CD4-positive, alpha-beta memory T cell (primary cell): ENCODE measurements at regions of chr12 and their contacts with region 1.

Region 1: GRCh38 chr12:66279123-66279712 is 23.1 kb upstream of the HELB start:
- DNase-seq: peak; percentile 43 to 58 (median 58)
- H3K4me3 ChIP-seq: no peak overlapping the region
- H3K4me3 Mint-ChIP-seq: peak overlapping the region; percentile 17 to 82 (median 65)
- H3K27ac ChIP-seq: no peak overlapping the region
- H3K27ac Mint-ChIP-seq: peak overlapping the region in 4 of 7 donors; percentile 5 to 58 (median 28)
- H3K4me1 ChIP-seq: peaks cover 43% of the 10 kb centered on the region
- H3K4me1 Mint-ChIP-seq: peaks cover 37 to 74% (median 59%) of the 10 kb centered on the region in 4 donors
- H3K27me3 ChIP-seq: no peaks in the 10 kb centered on the region
- H3K27me3 Mint-ChIP-seq: no peaks in the 10 kb centered on the region

Region 2: DNA sequence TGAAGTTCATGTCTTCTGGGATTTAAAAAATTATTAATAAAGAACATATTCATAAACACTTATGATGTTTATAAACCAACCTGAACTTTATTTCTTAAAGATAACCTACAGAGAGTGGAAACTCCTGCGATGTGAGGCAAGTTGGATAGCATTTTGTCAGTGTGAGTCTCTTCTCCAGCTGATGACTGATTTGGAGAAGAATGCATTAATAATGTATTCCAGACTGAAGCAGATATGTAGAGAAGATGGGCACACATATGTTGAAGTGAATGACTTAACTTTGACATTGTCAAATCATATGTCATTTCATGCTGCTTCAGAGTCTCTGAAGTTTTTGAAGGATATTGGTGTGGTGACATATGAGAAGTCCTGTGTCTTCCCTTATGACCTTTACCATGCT is 30.4 kb after region 1 on chr12:
- CTCF ChIA-PET with region 1: interaction called, 54 read pairs
- POLR2A ChIA-PET with region 1: interaction called, 51 read pairs
- intact Hi-C with region 1: no loop called
- DNase-seq: no peak
- H3K4me3 ChIP-seq: no peak overlapping the region
- H3K4me3 Mint-ChIP-seq: peak overlapping the region in 7 of 8 donors; percentile 11 to 85 (median 74)
- H3K27ac ChIP-seq: no peak overlapping the region
- H3K27ac Mint-ChIP-seq: peak overlapping the region in 3 of 7 donors; percentile 8 to 80 (median 63)
- H3K4me1 ChIP-seq: peaks cover 94% of the 10 kb centered on the region
- H3K4me1 Mint-ChIP-seq: peaks cover 67 to 89% (median 79%) of the 10 kb centered on the region in 4 donors
- H3K27me3 ChIP-seq: no peaks in the 10 kb centered on the region
- H3K27me3 Mint-ChIP-seq: no peaks in the 10 kb centered on the region

Region 3: DNA sequence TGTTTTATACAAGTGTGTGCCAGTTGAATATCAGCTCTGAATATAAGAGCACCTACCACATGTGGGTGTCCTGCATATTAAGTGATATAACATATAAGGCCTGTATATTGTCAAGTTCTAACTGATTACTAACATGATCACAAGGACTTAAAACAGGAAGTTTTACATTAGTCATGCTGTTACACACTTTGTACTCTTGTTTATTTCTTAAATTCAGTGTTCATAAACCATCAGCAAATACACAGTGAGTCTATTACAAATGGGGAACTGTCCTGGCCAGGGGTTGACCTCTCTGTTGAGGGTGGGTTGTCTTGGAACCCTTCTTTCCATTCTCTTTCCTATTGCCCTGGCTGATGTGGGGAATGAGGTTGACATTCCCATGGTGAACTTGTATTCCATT is 42.2 kb after region 1 on chr12:
- CTCF ChIA-PET with region 1: interaction called, 12 read pairs
- POLR2A ChIA-PET with region 1: no interaction called
- intact Hi-C with region 1: loop called (anchors 10 kb)
- DNase-seq: no peak
- H3K4me3 ChIP-seq: no peak overlapping the region
- H3K4me3 Mint-ChIP-seq: peak overlapping the region in 1 of 8 donors; percentile 3
- H3K27ac ChIP-seq: no peak overlapping the region
- H3K27ac Mint-ChIP-seq: peak overlapping the region in 5 of 7 donors; percentile 33 to 80 (median 63)
- H3K4me1 ChIP-seq: peaks cover 16% of the 10 kb centered on the region
- H3K4me1 Mint-ChIP-seq: peaks cover 30 to 66% (median 53%) of the 10 kb centered on the region in 4 donors
- H3K27me3 ChIP-seq: no peaks in the 10 kb centered on the region
- H3K27me3 Mint-ChIP-seq: no peaks in the 10 kb centered on the region

Region 4: DNA sequence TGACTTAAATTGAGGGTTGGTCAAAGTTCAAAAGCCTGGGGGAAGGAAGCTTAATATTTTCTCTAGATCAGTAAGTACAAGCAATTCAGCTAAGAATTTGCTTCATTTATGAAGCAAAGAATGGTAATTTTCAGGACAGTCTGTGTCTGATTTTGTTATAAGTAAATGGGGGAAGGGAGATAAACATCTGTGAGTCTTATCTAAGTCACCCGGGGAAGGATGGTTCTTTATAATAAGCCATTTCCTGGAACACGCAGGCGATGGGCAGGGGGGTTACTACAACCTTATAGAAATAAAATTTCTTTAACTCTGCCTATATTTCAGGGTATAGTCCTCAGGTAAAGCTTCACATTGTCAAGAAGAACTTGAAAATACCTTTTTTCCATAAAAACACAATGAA is 66.0 kb after region 1 on chr12:
- CTCF ChIA-PET with region 1: interaction called, 11 read pairs
- POLR2A ChIA-PET with region 1: interaction called, 3 read pairs
- intact Hi-C with region 1: no loop called
- DNase-seq: no peak
- H3K4me3 ChIP-seq: no peak overlapping the region
- H3K4me3 Mint-ChIP-seq: peak overlapping the region in 2 of 8 donors; percentile 3 to 27
- H3K27ac ChIP-seq: no peak overlapping the region
- H3K27ac Mint-ChIP-seq: peak overlapping the region; percentile 2 to 94 (median 57)
- H3K4me1 ChIP-seq: peaks cover 4% of the 10 kb centered on the region
- H3K4me1 Mint-ChIP-seq: peaks cover 24 to 36% (median 32%) of the 10 kb centered on the region in 4 donors
- H3K27me3 ChIP-seq: no peaks in the 10 kb centered on the region
- H3K27me3 Mint-ChIP-seq: no peaks in the 10 kb centered on the region